ENCODE measurements at regions of chr10 and their contacts with region 1.

Region 1: GRCh38 chr10:121994390-121994961 is 5.5 kb downstream of the TACC2 start:
- DNase-seq: peak; percentile 54 to 61
- ATAC-seq: peak; percentile 67 to 89 (median 83)
- H3K4me3 ChIP-seq: peak overlapping the region; percentile 26 to 50 (median 38)
- H3K27ac ChIP-seq: peak overlapping the region; percentile 70 to 94 (median 88)
- H3K4me1 ChIP-seq: peaks cover 0 to 60% (median 13%) of the 10 kb centered on the region in 9 donors
- H3K27me3 ChIP-seq: no peaks in the 10 kb centered on the region
- CTCF ChIP-seq: peak in 2 of 9 donors; percentile 23 to 24

Region 2: DNA sequence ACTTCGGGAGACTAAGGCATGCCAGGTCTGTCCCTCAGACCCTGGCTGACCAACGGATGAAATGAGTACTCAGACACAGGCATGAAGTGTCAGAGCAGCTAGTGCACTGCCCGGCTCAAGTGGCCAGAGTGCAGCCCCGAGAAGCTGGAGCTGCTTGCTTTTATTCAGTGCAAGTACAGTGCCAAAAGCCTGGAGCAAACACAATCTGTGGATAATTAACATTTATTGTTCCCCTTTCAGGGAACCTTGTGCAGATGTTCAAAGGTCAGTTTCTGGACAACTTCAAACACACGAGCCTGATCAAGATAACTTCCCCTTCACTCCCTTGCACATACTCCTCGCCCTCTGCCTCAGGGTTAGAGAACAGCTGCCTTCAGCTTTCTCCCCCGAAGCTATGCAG is 58.8 kb before region 1 on chr10:
- intact Hi-C with region 1: no loop called
- DNase-seq: no peak
- ATAC-seq: no peak
- H3K4me3 ChIP-seq: no peak overlapping the region
- H3K27ac ChIP-seq: no peak overlapping the region
- H3K4me1 ChIP-seq: no peaks in the 10 kb centered on the region
- H3K27me3 ChIP-seq: no peaks in the 10 kb centered on the region
- CTCF ChIP-seq: no peak

Region 3: GRCh38 chr10:122014652-122015248 is 20.3 kb after region 1 on chr10:
- intact Hi-C with region 1: loop called in 1 of 10 experiments (anchors 2 kb)
- DNase-seq: no peak
- ATAC-seq: peak in 3 of 8 donors; percentile 34 to 68 (median 47)
- H3K4me3 ChIP-seq: no peak overlapping the region
- H3K27ac ChIP-seq: peak overlapping the region in 8 of 10 donors; percentile 2 to 87 (median 83)
- H3K4me1 ChIP-seq: peaks cover 0 to 72% (median 29%) of the 10 kb centered on the region in 9 donors
- H3K27me3 ChIP-seq: peaks cover 0 to 11% (median 0%) of the 10 kb centered on the region in 7 donors
- CTCF ChIP-seq: no peak

Region 4: GRCh38 chr10:122034149-122034756 is 39.8 kb after region 1 on chr10:
- intact Hi-C with region 1: loop called in 2 of 10 experiments (anchors 5 kb)
- DNase-seq: no peak
- ATAC-seq: no peak
- H3K4me3 ChIP-seq: no peak overlapping the region
- H3K27ac ChIP-seq: peak overlapping the region in 7 of 10 donors; percentile 33 to 85 (median 78)
- H3K4me1 ChIP-seq: peaks cover 0 to 69% (median 34%) of the 10 kb centered on the region in 9 donors
- H3K27me3 ChIP-seq: peaks cover 0 to 4% (median 0%) of the 10 kb centered on the region in 7 donors
- CTCF ChIP-seq: no peak

Region 5: GRCh38 chr10:122044045-122044661 is 49.7 kb after region 1 on chr10:
- intact Hi-C with region 1: loop called in 3 of 10 experiments (anchors 5 kb)
- DNase-seq: peak in 1 of 2 donors; percentile 54
- ATAC-seq: peak; percentile 61 to 89 (median 84)
- H3K4me3 ChIP-seq: no peak overlapping the region
- H3K27ac ChIP-seq: peak overlapping the region; percentile 30 to 82 (median 54)
- H3K4me1 ChIP-seq: peaks cover 0 to 36% (median 16%) of the 10 kb centered on the region in 9 donors
- H3K27me3 ChIP-seq: no peaks in the 10 kb centered on the region
- CTCF ChIP-seq: no peak

Region 6: GRCh38 chr10:122239578-122240257 is 245.2 kb after region 1 on chr10:
- intact Hi-C with region 1: no loop called
- DNase-seq: no peak
- ATAC-seq: no peak
- H3K4me3 ChIP-seq: no peak overlapping the region
- H3K27ac ChIP-seq: no peak overlapping the region
- H3K4me1 ChIP-seq: peaks cover 0 to 16% (median 6%) of the 10 kb centered on the region in 9 donors
- H3K27me3 ChIP-seq: no peaks in the 10 kb centered on the region
- CTCF ChIP-seq: no peak

Measured in heart right ventricle (tissue), 16 donors.